Posterior vena cava (tissue), 2 donors: ENCODE measurements at regions of chr6 and their contacts with region 1.

Region 1: GRCh38 chr6:133995296-133995695 is 42.3 kb downstream of the TBPL1 start:
- DNase-seq: no peak

Region 2: GRCh38 chr6:134640975-134641429 is 645.7 kb after region 1 on chr6:
- intact Hi-C with region 1: loop called in 1 of 2 experiments (anchors 5 kb)
- DNase-seq: peak; percentile 92